ENCODE measurements at regions of chr10 and their contacts with region 1.

Region 1: DNA sequence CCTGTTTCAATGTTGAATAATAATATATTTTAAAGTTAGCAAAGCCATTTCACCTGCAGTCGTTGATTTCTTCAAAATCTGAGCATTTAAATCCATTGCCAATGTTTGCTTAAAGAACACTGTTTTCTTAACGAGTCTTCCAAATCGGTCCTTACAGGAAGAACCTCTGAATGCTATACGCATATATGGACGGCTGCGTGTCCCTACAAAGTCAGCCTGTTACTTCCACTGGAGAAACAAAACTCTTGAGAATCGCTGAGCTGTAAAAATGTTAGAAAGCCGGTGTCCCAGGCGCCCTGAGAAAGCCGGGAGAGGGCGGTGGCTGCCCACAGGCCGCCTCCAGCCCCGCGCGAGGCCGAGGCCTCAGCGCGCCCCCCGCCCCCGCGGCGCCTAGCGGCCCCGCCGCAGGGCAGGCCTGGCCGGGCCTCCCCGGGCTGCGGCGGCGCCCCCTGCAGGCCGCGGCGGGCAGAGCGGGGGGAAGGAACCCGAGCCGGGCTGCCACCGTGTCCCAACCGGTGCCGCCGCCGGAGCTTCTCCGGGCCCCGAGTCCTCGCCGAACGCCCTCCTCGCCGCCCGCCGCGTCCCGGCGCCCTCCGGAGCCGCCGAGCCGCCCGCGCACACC is at the start of gene FHIP2A:
- DNase-seq: peak; percentile 84
- ATAC-seq: peak; percentile 93
- H3K4me3 Mint-ChIP-seq: peak within 1 kb of the TSS; percentile 95
- H3K27ac Mint-ChIP-seq: peak within 1 kb of the TSS; percentile 94
- H3K4me1 Mint-ChIP-seq: peaks cover 31% of the 10 kb centered on the region
- H3K27me3 Mint-ChIP-seq: peaks cover 12% of the 10 kb centered on the region
- total RNA-seq, gene FHIP2A: 15.2 to 17.6 TPM

Region 2: DNA sequence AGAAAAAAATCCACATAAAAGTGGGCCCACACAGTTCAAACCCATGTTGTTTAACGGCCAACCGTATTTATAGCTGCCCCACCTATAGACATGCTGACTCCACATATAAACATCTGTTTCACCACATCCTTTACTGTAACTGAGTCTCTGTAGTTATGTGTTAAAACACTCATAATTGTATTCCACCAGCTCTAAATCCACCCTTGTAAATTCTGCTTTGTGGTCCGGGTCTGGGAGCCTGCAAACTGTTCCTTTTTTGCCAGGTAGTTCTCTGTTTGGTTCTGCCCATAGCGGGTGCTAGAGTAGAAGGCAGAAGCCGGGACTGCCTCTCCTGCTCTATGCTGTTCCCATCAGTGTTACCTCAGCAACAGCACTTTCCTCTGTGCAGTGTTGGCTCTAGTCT is 20.0 kb before region 1 on chr10:
- CTCF ChIA-PET with region 1: interaction called, 20 read pairs
- POLR2A ChIA-PET with region 1: interaction called, 21 read pairs
- DNase-seq: peak; percentile 61
- ATAC-seq: peak; percentile 88
- H3K4me3 Mint-ChIP-seq: peak overlapping the region; percentile 63
- H3K27ac Mint-ChIP-seq: peak overlapping the region; percentile 88
- H3K4me1 Mint-ChIP-seq: peaks cover 34% of the 10 kb centered on the region
- H3K27me3 Mint-ChIP-seq: peaks cover 8% of the 10 kb centered on the region

Region 3: GRCh38 chr10:114810926-114811325 is 10.5 kb before region 1 on chr10:
- CTCF ChIA-PET with region 1: interaction called, 48 read pairs
- POLR2A ChIA-PET with region 1: interaction called, 25 read pairs
- DNase-seq: peak; percentile 26
- ATAC-seq: peak; percentile 86
- H3K4me3 Mint-ChIP-seq: peak overlapping the region; percentile 6
- H3K27ac Mint-ChIP-seq: peak overlapping the region; percentile 74
- H3K4me1 Mint-ChIP-seq: peaks cover 21% of the 10 kb centered on the region
- H3K27me3 Mint-ChIP-seq: no peaks in the 10 kb centered on the region

Region 4: DNA sequence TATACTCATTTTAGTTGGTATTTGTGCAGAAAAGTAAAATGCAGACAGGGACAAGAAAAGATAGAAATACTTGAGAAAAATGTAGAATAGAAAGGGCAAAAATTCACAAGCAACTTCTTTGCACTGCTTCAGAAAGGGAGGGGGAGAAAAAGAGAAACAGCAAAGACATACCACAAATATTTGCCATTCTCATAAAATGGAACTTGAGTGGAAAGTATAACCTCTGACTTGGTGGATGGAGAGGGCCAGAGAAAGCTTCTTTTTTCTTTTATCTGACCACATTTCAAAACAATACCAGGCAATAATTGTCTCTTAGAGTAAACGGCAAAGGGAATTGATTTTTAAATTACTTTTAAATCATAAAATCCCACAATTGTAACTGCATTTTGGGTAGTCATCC is 80.7 kb after region 1 on chr10:
- CTCF ChIA-PET with region 1: no interaction called
- POLR2A ChIA-PET with region 1: no interaction called
- DNase-seq: no peak
- ATAC-seq: no peak
- H3K4me3 Mint-ChIP-seq: no peak overlapping the region
- H3K27ac Mint-ChIP-seq: no peak overlapping the region
- H3K4me1 Mint-ChIP-seq: peaks cover 5% of the 10 kb centered on the region
- H3K27me3 Mint-ChIP-seq: peaks cover 12% of the 10 kb centered on the region

Region 5: DNA sequence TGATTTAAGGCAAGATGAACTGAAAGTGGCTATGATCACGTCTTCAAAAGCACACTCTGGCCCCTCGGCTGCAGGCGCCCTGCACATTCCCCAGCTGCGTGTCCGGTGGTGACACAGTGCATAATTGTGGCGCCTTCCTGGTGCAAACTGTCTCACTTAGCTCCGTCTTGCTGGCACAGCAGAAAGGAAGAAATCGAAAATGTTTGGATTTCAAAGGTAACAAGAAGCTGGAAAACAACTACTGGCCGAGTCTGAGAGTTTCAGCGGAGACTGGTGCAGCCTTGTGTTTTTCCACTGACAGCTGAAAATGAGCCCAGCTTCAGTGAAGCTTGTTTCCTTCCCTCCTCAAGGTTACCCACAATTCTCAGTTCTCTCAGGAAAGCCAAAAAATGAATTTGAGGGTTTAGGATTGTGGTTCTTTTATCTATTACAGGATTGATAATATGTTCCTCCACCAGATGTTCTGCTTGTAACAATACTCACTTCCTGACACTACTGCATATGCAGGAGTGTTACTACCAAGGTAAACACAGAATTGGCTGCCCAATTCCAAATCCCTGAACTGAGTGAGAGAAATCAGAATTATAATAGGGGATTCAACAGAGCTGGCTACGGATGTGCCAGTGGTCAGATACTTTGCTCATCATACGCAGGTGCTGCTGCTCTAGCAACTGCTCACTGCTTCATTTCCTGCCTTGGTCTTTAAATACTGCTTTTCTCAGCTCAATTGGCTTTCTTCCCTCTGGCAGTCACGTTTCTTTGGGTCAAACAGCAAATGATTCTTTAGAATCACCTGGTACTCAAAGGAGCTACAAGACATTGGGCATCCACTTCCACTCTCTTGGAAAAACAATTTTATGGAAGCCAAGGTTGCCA is 180.3 kb after region 1 on chr10:
- CTCF ChIA-PET with region 1: no interaction called
- POLR2A ChIA-PET with region 1: no interaction called
- DNase-seq: no peak
- ATAC-seq: no peak
- H3K4me3 Mint-ChIP-seq: no peak overlapping the region
- H3K27ac Mint-ChIP-seq: no peak overlapping the region
- H3K4me1 Mint-ChIP-seq: peaks cover 3% of the 10 kb centered on the region
- H3K27me3 Mint-ChIP-seq: peaks cover 2% of the 10 kb centered on the region